Esophagus squamous epithelium (tissue), 5 donors: ENCODE measurements at regions of chr3 and their contacts with region 1.

Region 1: DNA sequence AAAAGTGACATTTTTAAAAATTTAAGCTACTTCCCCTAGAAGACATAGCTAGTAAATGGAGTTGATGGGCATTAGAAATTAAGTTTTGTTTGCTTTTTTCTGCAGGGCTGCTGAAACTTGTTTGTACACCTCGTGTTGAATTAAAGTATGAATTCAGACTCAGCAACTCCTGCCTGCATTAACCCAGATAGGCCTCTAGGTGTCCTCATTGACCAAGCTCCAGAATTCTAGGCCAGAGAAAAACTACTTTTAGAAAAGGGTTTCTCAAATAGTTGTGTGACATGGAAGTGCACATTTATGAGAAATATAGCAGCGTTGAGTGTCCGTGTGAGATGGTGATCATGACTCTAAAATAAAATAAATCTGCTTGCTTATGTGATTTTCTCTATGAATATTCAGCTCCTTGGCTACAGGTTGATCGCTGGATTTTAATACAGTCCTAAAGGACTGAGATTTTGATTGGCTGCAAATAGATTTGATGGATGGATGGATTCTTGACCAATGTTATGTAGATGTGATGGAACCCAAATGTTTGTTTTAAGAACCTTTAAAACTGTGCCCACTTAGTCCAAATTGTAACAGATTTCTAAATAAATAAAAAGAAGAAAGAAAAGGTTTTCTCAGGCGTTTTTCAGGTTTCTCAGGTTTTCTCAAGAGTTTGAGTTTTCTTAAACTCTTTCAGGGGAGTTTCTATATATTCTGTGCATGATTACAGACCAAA is 39.4 kb upstream of the LMOD3 start:
- DNase-seq: no peak
- H3K4me3 ChIP-seq: no peak overlapping the region
- H3K27ac ChIP-seq: no peak overlapping the region
- H3K4me1 ChIP-seq: no peaks in the 10 kb centered on the region
- H3K27me3 ChIP-seq: no peaks in the 10 kb centered on the region
- CTCF ChIP-seq: peak; percentile 87 to 98 (median 94)
- POLR2A ChIP-seq: no peak

Region 2: GRCh38 chr3:69306239-69307185 is 144.8 kb after region 1 on chr3:
- intact Hi-C with region 1: loop called (anchors 5 kb)
- DNase-seq: no peak
- H3K4me3 ChIP-seq: no peak overlapping the region
- H3K27ac ChIP-seq: peak overlapping the region in 3 of 4 donors; percentile 3 to 73 (median 56)
- H3K4me1 ChIP-seq: peaks cover 0 to 21% (median 4%) of the 10 kb centered on the region in 3 donors
- H3K27me3 ChIP-seq: no peaks in the 10 kb centered on the region
- CTCF ChIP-seq: peak; percentile 81 to 92 (median 86)
- POLR2A ChIP-seq: no peak

Region 3: GRCh38 chr3:69410250-69410649 is 248.5 kb after region 1 on chr3:
- intact Hi-C with region 1: loop called (anchors 10 kb)
- DNase-seq: no peak
- H3K4me3 ChIP-seq: no peak overlapping the region
- H3K27ac ChIP-seq: peak overlapping the region in 3 of 4 donors; percentile 26 to 63 (median 51)
- H3K4me1 ChIP-seq: peaks cover 3 to 34% (median 5%) of the 10 kb centered on the region in 3 donors
- H3K27me3 ChIP-seq: no peaks in the 10 kb centered on the region
- CTCF ChIP-seq: peak; percentile 44 to 85 (median 70)
- POLR2A ChIP-seq: no peak

Region 4: GRCh38 chr3:69665026-69665737 is 503.4 kb after region 1 on chr3:
- intact Hi-C with region 1: loop called (anchors 10 kb)
- DNase-seq: no peak
- H3K4me3 ChIP-seq: no peak overlapping the region
- H3K27ac ChIP-seq: peak overlapping the region in 1 of 4 donors; percentile 65
- H3K4me1 ChIP-seq: peaks cover 0 to 27% (median 9%) of the 10 kb centered on the region in 3 donors
- H3K27me3 ChIP-seq: no peaks in the 10 kb centered on the region
- CTCF ChIP-seq: no peak
- POLR2A ChIP-seq: no peak